ENCODE measurements at regions of chr7 and their contacts with region 1.

Region 1: DNA sequence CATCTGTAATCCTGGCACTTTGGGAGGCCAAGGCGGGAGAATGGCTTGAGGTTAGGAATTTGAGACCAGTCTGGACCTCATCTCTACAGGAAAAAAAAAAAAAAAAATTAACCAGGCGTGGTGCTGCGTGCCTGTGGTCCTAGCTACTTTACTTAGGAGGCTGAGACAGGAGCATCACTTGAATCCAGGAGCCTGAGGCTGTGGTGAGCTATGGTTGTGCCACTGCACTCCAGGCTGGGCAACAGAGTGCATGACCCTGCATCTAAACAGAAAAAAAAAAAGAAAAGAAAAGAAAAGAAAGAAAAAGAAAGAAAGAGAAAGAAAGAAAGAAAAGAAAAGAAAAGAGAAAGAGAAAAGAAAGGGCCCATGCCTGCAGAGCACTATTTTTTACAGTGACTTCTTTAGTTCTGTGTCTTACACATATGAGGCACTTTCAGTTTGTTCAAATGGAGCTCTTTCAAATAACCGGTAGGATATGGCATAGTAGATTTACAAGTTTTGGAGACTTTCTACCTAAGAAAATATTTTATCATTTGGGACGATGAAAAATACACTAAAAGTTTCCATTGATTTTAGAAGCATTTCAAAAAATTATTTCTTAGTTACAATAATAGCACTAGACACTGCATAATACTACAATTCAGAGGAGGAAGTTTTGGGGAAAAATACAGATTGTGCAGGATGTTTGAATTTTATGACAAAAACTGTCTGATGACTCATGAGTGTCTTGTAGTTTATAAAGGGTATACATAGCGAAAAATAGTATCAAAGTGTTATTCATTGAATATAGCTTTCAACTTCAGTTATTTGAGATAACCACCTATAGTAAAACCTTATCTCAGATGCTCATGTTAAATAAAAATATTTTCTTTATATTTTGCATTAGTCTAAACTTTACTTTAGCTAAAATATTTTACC is 75.9 kb downstream of the MDFIC start:
- DNase-seq: no peak
- H3K4me3 Mint-ChIP-seq: peak overlapping the region; percentile 45
- H3K27ac Mint-ChIP-seq: peak overlapping the region; percentile 76
- H3K4me1 Mint-ChIP-seq: peaks cover 56% of the 10 kb centered on the region
- H3K27me3 Mint-ChIP-seq: no peaks in the 10 kb centered on the region

Region 2: DNA sequence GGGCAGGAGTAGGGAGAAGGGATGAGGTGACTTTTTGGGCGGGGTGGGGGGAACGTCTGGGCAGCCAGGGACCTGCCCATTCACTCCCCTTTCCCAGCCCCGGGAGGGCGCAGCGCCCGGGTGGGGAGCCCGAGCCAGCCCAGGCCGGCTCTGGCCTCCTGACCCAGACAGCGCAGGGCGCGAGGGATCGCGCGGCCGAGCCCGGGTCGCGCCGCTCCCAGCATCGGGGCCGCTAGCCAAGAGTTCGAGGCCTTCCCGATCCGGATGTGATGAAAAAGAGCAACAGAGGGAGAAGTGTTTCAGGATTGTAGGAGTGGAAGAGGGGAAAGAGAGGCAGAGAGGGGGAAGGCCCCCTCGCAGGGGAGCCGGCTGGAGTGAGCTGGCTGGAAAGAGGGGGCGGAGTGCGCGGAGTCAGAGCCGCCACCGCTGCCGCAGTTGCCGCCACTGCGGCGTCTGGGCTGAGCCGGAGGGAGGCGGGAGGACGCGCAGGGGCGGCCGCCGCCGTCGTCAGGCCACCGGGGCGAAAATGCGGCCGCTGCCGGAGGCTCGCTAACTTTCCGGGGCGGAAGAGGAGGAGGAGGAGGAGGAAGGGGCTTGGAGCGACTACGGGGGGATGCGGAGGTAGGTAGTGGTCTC is 75.6 kb before region 1 on chr7 and contains the start of gene MDFIC:
- CTCF ChIA-PET with region 1: interaction called, 3 read pairs
- POLR2A ChIA-PET with region 1: interaction called, 14 read pairs
- DNase-seq: peak; percentile 69
- H3K4me3 Mint-ChIP-seq: peak within 1 kb of the TSS; percentile 99
- H3K27ac Mint-ChIP-seq: peak within 1 kb of the TSS; percentile 99
- H3K4me1 Mint-ChIP-seq: peaks cover 51% of the 10 kb centered on the region
- H3K27me3 Mint-ChIP-seq: no peaks in the 10 kb centered on the region
- total RNA-seq, gene MDFIC: 85.8 to 90.7 TPM

Region 3: GRCh38 chr7:115008465-115009114 is 10.8 kb after region 1 on chr7:
- CTCF ChIA-PET with region 1: interaction called, 9 read pairs
- POLR2A ChIA-PET with region 1: interaction called, 30 read pairs
- DNase-seq: peak; percentile 32
- H3K4me3 Mint-ChIP-seq: peak overlapping the region; percentile 72
- H3K27ac Mint-ChIP-seq: peak overlapping the region; percentile 96
- H3K4me1 Mint-ChIP-seq: peaks cover 79% of the 10 kb centered on the region
- H3K27me3 Mint-ChIP-seq: no peaks in the 10 kb centered on the region